IMR-90 (cell line): ENCODE measurements at regions of chr19 and their contacts with region 1.

Region 1: GRCh38 chr19:55216461-55217198 is 7.3 kb upstream of the PTPRH start:
- DNase-seq: peak; percentile 100
- ATAC-seq: peak; percentile 95
- H3K4me3 ChIP-seq: peak overlapping the region; percentile 25
- H3K27ac ChIP-seq: peak overlapping the region; percentile 55
- H3K4me1 ChIP-seq: peaks cover 4% of the 10 kb centered on the region
- H3K27me3 ChIP-seq: no peaks in the 10 kb centered on the region
- CTCF ChIP-seq: 0 out of 2 replicates have a peak, but pooled peaks have one; percentile 1
- POLR2A ChIP-seq: peak; percentile 38; the same call in 1 of the 2 replicates
- RAD21 ChIP-seq: peak; percentile 20; the same call in 1 of the 2 replicates

Region 2: DNA sequence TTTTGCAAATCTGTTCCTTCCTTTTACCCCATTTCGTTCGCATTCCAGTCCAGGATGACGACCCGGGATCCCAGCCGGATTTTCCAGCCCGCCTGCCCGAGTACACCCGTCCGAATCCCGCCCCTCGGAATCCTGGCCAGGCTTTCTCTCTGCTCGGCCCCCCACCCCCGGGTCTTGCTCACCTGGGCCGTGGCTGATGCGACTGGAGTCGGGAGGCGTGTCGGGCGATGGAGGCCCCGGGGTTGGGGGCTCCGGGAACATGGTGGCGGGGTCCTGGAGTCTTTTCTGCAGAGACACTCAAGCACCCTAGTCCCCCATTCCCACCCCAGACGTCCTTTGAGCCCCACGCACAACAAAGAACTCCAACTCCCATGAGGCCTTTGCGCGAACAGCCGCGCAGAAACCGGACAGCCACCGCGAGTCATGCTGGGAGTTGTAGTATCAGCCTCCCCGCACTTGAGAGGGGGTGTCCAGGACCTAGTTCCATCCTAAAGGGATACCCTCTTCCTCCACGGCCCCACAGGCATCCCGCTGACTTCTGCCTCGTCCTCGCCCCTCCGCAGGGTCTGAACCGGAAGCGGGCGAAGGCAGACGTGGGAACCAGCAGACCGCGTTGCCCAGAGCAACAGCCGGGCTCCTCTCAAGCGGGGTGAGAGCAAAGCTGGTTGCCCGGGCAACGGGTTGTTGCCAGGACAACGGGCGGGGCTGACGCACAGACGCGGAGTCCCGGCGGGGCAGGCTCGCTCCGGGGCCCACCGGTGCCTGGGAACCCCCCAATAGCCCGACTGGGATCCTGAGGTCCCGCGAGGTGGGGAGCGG is 37.6 kb before region 1 on chr19:
- CTCF ChIA-PET with region 1: no interaction called
- POLR2A ChIA-PET with region 1: no interaction called
- dilution Hi-C with region 1: no loop called
- in situ Hi-C with region 1: no loop called
- intact Hi-C with region 1: loop called (anchors 1 kb)
- DNase-seq: peak; percentile 77
- ATAC-seq: peak; percentile 83
- H3K4me3 ChIP-seq: peak overlapping the region; percentile 49
- H3K27ac ChIP-seq: no peak overlapping the region
- H3K4me1 ChIP-seq: peaks cover 4% of the 10 kb centered on the region
- H3K27me3 ChIP-seq: peaks cover 34% of the 10 kb centered on the region
- CTCF ChIP-seq: no peak
- POLR2A ChIP-seq: no peak
- RAD21 ChIP-seq: no peak

Region 3: GRCh38 chr19:55258828-55259539 is 42.4 kb after region 1 on chr19 and contains the start of gene PPP6R1:
- CTCF ChIA-PET with region 1: no interaction called
- POLR2A ChIA-PET with region 1: interaction called, 9 read pairs
- dilution Hi-C with region 1: no loop called
- in situ Hi-C with region 1: loop called (anchors 5 kb)
- intact Hi-C with region 1: loop called (anchors 1 kb)
- DNase-seq: peak; percentile 100
- ATAC-seq: peak; percentile 94
- H3K4me3 ChIP-seq: peak within 1 kb of the TSS; percentile 68
- H3K27ac ChIP-seq: peak within 1 kb of the TSS; percentile 88
- H3K4me1 ChIP-seq: peaks cover 16% of the 10 kb centered on the region
- H3K27me3 ChIP-seq: no peaks in the 10 kb centered on the region
- CTCF ChIP-seq: no peak
- POLR2A ChIP-seq: peak; percentile 90
- RAD21 ChIP-seq: peak; percentile 37
- total RNA-seq, gene PPP6R1: 19.9 and 20.0 TPM in 2 replicates

Region 4: DNA sequence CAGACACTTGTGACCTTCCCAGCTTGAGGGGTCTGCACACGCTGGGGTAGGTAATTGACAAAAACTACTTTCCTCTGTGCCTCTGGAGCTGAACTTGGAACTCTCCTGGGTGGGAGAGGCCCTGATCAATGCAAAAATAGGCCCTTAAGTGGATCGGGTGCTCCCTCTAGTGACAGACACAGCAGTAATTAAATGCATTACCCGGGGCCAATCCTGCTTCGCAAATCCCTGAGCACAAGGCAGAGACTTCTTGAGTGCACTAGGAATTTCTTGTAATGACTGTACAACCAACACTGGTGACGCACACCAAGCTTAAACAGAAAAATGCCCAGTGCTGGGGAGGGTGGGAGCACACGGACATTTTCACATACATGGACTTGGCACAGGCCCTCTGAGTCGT is 201.6 kb after region 1 on chr19:
- CTCF ChIA-PET with region 1: no interaction called
- POLR2A ChIA-PET with region 1: no interaction called
- dilution Hi-C with region 1: no loop called
- in situ Hi-C with region 1: no loop called
- intact Hi-C with region 1: no loop called
- DNase-seq: peak; percentile 91
- ATAC-seq: peak; percentile 99
- H3K4me3 ChIP-seq: no peak overlapping the region
- H3K27ac ChIP-seq: no peak overlapping the region
- H3K4me1 ChIP-seq: no peaks in the 10 kb centered on the region
- H3K27me3 ChIP-seq: peaks cover 11% of the 10 kb centered on the region
- CTCF ChIP-seq: peak; percentile 95
- POLR2A ChIP-seq: 0 out of 2 replicates have a peak, but pooled peaks have one; percentile 26
- RAD21 ChIP-seq: peak; percentile 95

Region 5: DNA sequence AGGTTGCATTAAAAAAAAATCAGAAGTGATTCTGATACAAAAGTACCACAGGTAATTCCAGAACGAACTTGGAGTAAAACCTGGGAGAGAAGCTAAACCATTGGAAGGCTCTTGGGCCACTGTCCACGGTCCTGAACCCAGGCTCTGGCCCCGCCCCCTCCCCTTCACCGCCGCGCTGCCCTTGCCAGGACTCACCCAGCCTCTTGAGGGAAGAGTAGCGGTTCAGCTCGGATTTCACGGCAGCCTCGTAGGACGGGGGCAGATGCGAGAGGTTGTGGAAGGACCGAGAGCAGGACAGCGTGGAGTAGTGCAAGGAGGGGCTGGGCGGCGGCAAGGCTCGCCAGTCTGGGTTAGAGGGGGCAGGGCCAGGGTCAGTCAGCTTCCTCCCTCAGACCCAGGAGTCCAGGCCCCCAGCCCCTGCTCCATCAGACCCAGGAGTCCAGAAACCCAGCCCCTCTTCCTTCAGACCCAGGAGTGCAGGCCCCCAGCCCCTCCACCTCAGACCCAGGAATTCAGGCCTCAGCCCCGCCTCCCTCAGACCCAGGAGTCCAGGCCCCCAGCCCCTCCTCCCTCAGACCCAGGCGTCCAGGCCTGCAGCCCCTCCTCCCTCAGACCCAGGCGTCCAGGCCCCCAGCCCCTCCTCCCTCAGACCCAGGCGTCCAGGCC is 220.9 kb after region 1 on chr19:
- CTCF ChIA-PET with region 1: no interaction called
- POLR2A ChIA-PET with region 1: no interaction called
- dilution Hi-C with region 1: no loop called
- in situ Hi-C with region 1: no loop called
- intact Hi-C with region 1: loop called (anchors 5 kb)
- DNase-seq: peak; percentile 56
- ATAC-seq: peak; percentile 99
- H3K4me3 ChIP-seq: no peak overlapping the region
- H3K27ac ChIP-seq: no peak overlapping the region
- H3K4me1 ChIP-seq: no peaks in the 10 kb centered on the region
- H3K27me3 ChIP-seq: peaks cover 43% of the 10 kb centered on the region
- CTCF ChIP-seq: no peak
- POLR2A ChIP-seq: no peak
- RAD21 ChIP-seq: no peak